Esophagus muscularis mucosa (tissue), 4 donors: ENCODE measurements at regions of chr1 and their contacts with region 1.

Region 1: DNA sequence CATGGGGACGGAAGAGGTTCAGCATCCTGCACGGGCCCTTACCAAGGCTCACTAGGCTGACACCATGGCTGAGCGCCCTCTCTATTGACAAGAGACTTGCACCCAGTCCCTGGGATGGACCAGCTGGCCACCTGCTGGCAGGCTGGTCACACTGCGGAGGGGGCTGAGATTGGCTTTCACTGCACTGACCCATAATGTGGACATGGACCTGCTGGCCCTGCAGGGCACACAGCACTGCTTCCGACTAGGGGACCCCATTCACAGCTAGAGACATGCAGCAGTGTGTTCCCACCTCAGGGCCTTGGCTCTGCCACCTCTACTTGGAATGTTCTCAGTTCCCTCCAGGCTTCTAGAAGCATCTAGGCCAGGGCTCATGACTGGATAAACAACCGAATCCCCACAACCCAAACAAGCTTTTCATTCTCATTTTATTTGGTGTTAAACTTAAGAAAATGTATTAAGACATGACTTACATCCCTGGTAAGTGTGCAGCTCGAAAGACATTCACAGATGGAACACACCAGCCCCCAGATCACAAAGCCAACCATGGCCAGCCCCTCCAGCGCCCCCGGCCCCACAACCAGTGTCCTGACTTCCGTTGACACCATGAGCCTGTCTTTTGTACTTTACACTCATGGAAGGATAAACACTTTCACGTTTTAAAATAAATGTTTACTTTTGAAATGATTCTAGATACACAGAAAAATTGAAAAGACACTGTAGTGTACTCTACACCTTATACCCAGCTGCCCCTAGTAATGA is 9.3 kb upstream of the SRARP start:
- DNase-seq: no peak
- H3K4me3 ChIP-seq: no peak overlapping the region
- H3K27ac ChIP-seq: peak overlapping the region; percentile 20 to 59 (median 44)
- H3K4me1 ChIP-seq: peaks cover 0 to 36% (median 23%) of the 10 kb centered on the region in 4 donors
- H3K27me3 ChIP-seq: no peaks in the 10 kb centered on the region
- CTCF ChIP-seq: peak; percentile 90 to 96 (median 92)
- EP300 ChIP-seq: no peak
- POLR2A ChIP-seq: no peak

Region 2: DNA sequence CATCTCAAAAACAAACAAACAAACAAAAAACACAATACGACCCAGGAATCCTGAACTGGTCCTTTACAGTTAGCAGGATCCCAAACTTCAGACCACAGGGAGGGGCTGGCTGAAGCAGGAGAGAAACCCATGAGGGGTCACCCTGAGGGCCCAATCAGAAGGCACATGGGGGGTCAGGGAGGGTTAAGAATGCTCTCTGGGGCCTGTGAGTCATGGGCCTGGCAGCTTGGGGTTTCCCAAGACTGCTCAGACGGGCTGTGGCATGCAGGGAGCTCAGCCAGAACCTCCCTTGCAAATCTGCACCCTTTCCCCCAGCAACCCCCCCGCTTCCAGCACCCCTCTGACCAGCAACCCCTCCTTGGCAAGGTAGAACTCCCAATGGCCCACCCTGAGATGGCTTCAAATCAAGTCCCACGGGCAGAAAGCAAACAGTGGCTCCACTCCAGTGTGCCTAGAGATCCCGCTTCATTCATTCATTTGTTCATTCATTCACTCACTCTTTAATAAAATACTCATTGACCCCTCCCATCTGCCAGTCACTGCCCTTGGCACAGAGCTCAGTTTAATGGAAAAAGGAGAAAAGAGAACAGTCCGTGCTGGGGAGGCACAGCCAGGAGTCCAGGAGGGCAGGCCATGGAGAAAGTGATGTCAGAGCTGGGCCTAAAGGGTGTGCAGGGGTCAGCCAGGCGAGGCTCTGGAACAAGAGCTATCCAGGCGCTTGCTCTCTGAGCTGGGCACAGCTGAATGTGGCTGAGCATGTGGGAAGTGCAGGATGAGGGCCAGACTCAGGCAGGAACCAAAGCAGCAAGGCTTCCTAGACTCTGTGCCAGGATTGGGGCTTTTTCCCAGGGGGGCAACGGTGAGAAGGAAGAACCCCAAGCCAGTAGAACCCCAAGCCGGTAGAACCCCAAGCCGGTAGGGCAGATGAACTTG is 195.5 kb before region 1 on chr1:
- intact Hi-C with region 1: loop called (anchors 5 kb)
- DNase-seq: no peak
- H3K4me3 ChIP-seq: no peak overlapping the region
- H3K27ac ChIP-seq: peak overlapping the region; percentile 58 to 74 (median 70)
- H3K4me1 ChIP-seq: peaks cover 19 to 66% (median 41%) of the 10 kb centered on the region in 4 donors
- H3K27me3 ChIP-seq: no peaks in the 10 kb centered on the region
- CTCF ChIP-seq: no peak
- EP300 ChIP-seq: peak; percentile 13
- POLR2A ChIP-seq: no peak

Region 3: GRCh38 chr1:15820478-15820877 is 174.3 kb before region 1 on chr1:
- intact Hi-C with region 1: loop called (anchors 2 kb)
- DNase-seq: no peak
- H3K4me3 ChIP-seq: no peak overlapping the region
- H3K27ac ChIP-seq: no peak overlapping the region
- H3K4me1 ChIP-seq: peaks cover 4 to 13% (median 10%) of the 10 kb centered on the region in 4 donors
- H3K27me3 ChIP-seq: no peaks in the 10 kb centered on the region
- CTCF ChIP-seq: no peak
- EP300 ChIP-seq: no peak
- POLR2A ChIP-seq: no peak